Endothelial cell of umbilical vein (primary cell): ENCODE measurements at regions of chr4 and their contacts with region 1.

Region 1: GRCh38 chr4:87032884-87033533 is 98.2 kb downstream of the AFF1 start:
- DNase-seq: peak; percentile 94
- H3K4me3 ChIP-seq: peak overlapping the region in 1 of 3 experiments; percentile 13
- H3K27ac ChIP-seq: peak overlapping the region; percentile 19
- H3K4me1 ChIP-seq: peaks cover 63% of the 10 kb centered on the region
- H3K27me3 ChIP-seq: no peaks in the 10 kb centered on the region
- CTCF ChIP-seq: no peak
- POLR2A ChIP-seq: peak; percentile 33

Region 2: DNA sequence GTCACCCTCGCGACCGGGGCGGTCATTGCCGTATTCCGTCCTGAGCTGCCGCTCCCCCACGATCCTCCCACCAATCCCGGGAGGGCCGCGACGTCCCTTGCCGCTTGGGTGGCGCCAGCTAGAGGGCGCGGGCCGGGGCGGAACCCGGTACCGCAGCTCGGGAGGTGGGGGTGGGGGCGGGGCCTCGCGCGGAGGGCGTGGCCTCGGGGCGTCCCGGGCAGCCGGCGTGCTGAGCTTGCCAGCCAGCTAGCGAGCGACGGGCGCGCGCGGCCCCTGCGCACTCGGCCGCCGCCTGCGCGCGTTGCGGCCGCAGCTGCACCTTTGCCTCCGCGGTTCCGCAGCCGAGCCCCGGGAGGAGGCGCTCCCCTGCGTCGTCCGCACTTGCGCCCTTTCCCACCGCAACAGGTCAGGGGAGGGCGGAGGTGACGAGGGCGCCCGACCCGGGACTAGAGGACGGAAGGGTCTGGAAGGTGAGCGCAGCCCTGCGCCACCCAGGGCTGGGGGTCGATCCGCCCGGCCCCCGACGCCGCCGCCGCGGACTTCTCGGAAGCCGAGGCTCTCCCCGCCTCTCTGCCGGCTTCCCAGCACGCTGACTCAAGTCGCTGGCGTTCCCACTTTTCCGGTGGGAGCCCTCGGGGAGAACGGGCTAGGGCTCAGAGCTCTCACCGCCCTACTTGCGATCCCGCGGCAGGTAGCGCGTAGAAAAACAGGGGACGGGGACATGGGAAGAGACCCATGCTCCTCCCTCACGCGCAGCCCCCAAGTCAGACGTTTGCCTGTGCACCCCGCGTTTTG is 98.0 kb before region 1 on chr4 and contains the start of gene AFF1:
- CTCF ChIA-PET with region 1: interaction called, 11 read pairs
- POLR2A ChIA-PET with region 1: no interaction called
- dilution Hi-C with region 1: no loop called
- intact Hi-C with region 1: no loop called
- DNase-seq: peak; percentile 93
- H3K4me3 ChIP-seq: peak within 1 kb of the TSS; percentile 59 to 86 (median 84)
- H3K27ac ChIP-seq: peak within 1 kb of the TSS; percentile 89
- H3K4me1 ChIP-seq: peaks cover 42% of the 10 kb centered on the region
- H3K27me3 ChIP-seq: no peaks in the 10 kb centered on the region
- CTCF ChIP-seq: peak; percentile 15 to 28
- POLR2A ChIP-seq: peak; percentile 91
- total RNA-seq, gene AFF1: 80.7 and 106 TPM in 2 replicates

Region 3: GRCh38 chr4:87044511-87045233 is 11.7 kb after region 1 on chr4:
- CTCF ChIA-PET with region 1: interaction called, 5 read pairs
- POLR2A ChIA-PET with region 1: no interaction called
- dilution Hi-C with region 1: no loop called
- intact Hi-C with region 1: loop called (anchors 1 kb)
- DNase-seq: peak; percentile 83
- H3K4me3 ChIP-seq: peak overlapping the region in 1 of 3 experiments; percentile 63
- H3K27ac ChIP-seq: peak overlapping the region; percentile 66
- H3K4me1 ChIP-seq: peaks cover 35% of the 10 kb centered on the region
- H3K27me3 ChIP-seq: no peaks in the 10 kb centered on the region
- CTCF ChIP-seq: no peak
- POLR2A ChIP-seq: no peak

Region 4: GRCh38 chr4:87144356-87144755 is 111.3 kb after region 1 on chr4:
- CTCF ChIA-PET with region 1: no interaction called
- POLR2A ChIA-PET with region 1: no interaction called
- dilution Hi-C with region 1: no loop called
- intact Hi-C with region 1: no loop called
- DNase-seq: no peak
- H3K4me3 ChIP-seq: no peak overlapping the region
- H3K27ac ChIP-seq: no peak overlapping the region
- H3K4me1 ChIP-seq: no peaks in the 10 kb centered on the region
- H3K27me3 ChIP-seq: no peaks in the 10 kb centered on the region
- CTCF ChIP-seq: no peak
- POLR2A ChIP-seq: no peak